A549 (cell line): ENCODE measurements at regions of chr18 and their contacts with region 1.

Region 1: DNA sequence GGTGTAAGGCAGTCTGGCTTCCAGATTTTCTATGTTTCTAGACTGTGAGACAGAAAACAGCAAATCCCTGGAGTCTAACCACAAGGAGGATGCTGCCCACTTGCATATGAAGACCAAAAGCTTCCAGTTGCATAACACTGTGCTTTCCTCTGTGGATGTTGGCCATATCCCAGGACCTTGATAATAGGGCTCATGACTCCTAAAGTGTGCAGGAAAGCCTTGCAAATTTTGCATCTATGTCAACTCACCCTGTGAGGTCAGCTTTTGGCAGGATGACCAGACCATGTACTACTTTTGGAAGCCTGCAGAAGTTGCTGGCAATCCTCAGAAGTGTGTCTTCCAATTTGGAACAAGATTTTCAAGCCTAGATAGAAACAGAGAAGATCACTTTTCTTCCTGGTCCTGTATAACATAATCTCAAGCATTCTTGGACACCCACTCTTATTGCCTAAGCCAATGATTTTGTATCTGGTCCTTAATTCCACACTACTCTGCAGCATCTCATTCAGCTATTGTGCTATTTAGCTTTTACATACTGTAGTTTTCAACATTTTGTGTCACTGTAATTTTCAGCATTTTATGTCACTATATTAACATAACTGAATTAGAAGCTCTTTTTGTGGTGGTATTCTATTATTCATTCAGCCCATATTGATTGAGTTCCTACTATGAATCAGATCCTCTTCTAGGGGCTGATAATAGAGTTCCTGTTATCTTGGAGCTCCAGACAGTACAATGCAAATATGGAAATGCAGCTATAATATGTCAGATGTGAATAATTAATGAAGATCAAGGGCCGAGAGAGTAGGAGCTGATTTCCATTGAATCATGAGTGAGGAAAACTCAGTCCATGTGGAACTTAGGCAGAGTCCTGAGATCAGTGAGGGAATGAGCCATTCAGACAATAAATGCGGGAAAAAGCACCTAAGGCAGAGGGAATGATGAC is 85.3 kb upstream of the RAB27B start:
- DNase-seq: peak in 1 of 2 experiments; percentile 29
- ATAC-seq: peak; percentile 30 to 33; a peak in 5 of 6 replicates
- H3K4me3 ChIP-seq: no peak overlapping the region
- H3K27ac ChIP-seq: peak overlapping the region; percentile 24 to 68; a peak in 4 of 6 replicates
- H3K4me1 ChIP-seq: peaks cover 36% of the 10 kb centered on the region
- CTCF ChIP-seq: no peak
- EP300 ChIP-seq: no peak
- POLR2A ChIP-seq: no peak
- RAD21 ChIP-seq: no peak

Region 2: GRCh38 chr18:54647176-54647575 is 95.8 kb before region 1 on chr18:
- CTCF ChIA-PET with region 1: no interaction called
- POLR2A ChIA-PET with region 1: no interaction called
- DNase-seq: peak in 1 of 2 experiments; percentile 48
- ATAC-seq: peak in 1 of 2 experiments; percentile 51; a peak in 1 of 6 replicates
- H3K4me3 ChIP-seq: no peak overlapping the region
- H3K27ac ChIP-seq: no peak overlapping the region
- H3K4me1 ChIP-seq: no peaks in the 10 kb centered on the region
- CTCF ChIP-seq: peak; percentile 50
- EP300 ChIP-seq: no peak
- POLR2A ChIP-seq: no peak
- RAD21 ChIP-seq: peak; percentile 45 to 54; a peak in 4 of 5 replicates

Region 3: DNA sequence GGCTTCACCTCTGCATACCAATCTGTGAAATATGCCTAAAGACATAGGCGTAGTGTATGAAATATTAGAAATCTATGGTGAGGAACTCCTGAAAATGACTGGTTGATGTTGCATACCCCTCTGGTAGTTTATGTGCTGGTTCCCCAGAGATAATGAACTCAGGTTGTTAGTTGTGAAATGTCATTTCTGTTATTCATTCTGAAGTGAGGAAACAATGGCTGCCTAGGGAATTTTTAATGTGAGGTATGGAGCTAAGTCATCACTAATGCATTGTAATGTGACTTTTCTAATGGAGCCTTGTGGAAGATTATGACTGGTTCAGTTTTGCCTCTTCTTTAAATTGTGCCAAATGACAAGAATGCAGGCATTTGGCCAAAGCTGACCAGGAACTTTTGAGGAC is 23.7 kb after region 1 on chr18:
- CTCF ChIA-PET with region 1: no interaction called
- POLR2A ChIA-PET with region 1: no interaction called
- DNase-seq: no peak
- ATAC-seq: no peak; a peak in 1 of 6 replicates
- H3K4me3 ChIP-seq: no peak overlapping the region
- H3K27ac ChIP-seq: peak overlapping the region; percentile 58 to 71
- H3K4me1 ChIP-seq: peaks cover 31% of the 10 kb centered on the region
- CTCF ChIP-seq: no peak
- EP300 ChIP-seq: no peak
- POLR2A ChIP-seq: no peak
- RAD21 ChIP-seq: no peak

Region 4: DNA sequence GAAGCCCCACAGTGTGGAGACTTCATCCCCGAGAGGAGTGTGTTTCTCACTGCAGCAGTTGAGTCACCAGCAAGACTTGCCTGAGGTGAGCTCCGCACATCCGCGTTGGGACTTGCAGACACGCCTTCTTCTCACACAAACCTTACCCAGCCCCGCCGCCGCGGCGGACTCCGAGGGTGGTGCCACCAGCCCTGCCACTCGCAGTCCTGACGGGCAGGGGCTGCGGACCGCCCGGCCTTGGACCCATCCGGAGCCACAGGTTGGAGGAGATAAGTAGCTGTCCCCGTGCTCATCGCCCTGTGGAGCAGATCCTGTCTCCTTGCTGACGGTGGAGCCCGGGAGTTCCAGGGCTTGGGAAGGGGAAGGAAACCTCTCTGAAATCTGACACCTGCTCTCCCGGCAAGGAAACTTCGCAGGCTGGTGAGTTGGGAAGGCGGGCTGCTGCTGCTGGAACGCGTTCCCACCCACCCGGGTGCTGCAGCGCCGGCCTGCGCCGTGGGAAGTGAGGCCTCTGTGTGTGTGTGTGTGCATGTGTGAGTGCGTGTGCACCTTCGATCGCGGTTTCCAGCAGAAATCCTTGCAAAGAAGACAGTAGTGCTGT is 85.4 kb after region 1 on chr18 and contains the start of gene RAB27B:
- CTCF ChIA-PET with region 1: interaction called, 3 read pairs
- POLR2A ChIA-PET with region 1: interaction called, 10 read pairs
- DNase-seq: peak; percentile 59 to 90
- ATAC-seq: peak; percentile 93 to 94
- H3K4me3 ChIP-seq: peak within 1 kb of the TSS; percentile 67
- H3K27ac ChIP-seq: peak within 1 kb of the TSS; percentile 92 to 98
- H3K4me1 ChIP-seq: peaks cover 32% of the 10 kb centered on the region
- CTCF ChIP-seq: no peak
- EP300 ChIP-seq: no peak
- POLR2A ChIP-seq: peak; percentile 59
- RAD21 ChIP-seq: no peak; a peak in 1 of 5 replicates
- polyA plus RNA-seq, gene RAB27B: 11.0 and 11.3 TPM in 2 replicates